Activated CD8-positive, alpha-beta T cell treated with anti-CD3 and anti-CD28 coated beads for 36 hours (primary cell): ENCODE measurements at regions of chr7 and their contacts with region 1.

Region 1: DNA sequence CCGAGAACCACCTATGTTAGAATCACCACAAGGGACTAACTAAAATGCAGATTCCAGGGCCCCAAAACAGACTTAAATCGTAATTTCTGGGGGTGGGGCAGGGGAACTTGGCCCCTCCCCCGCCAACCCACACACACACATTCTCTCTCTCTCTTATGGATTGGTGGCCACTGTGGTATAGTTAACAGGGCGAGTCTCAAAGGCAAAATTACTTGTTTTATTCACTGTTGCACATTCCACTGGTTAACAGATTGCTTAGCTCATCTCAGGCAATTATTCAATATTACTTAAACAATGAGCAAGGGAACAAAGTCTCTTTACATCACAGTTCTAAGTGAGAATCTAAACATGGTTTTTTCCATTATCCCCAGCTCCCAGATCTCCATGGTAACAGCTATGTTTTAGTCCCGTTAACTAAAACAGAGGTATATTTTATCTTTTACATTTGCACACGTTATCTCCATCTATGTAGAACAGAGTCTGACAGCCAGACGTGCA is 38.5 kb downstream of the IGF2BP3 start:
- DNase-seq: no peak
- ATAC-seq: no peak
- H3K4me3 Mint-ChIP-seq: no peak overlapping the region
- H3K27ac Mint-ChIP-seq: no peak overlapping the region
- H3K4me1 Mint-ChIP-seq: peaks cover 8% of the 10 kb centered on the region
- H3K27me3 Mint-ChIP-seq: peaks cover 18% of the 10 kb centered on the region
- CTCF ChIP-seq: no peak

Region 2: DNA sequence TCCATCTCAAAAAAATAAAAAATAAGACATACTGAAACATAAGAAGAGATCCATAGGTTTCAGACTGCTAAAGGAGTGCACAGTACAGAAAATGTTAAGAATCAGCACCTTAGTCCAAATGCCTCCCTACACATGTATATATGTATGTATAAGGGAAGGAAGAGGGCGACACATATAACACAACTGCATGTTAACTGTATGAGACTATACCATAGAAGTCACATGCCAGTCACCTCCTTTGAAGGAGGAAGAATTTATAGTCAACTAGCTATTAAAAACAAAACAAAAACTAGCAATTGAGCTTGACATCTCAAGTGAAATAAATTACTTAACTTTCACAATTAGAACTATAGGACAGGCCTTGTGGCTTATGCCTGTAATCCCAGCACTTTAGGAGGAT is 11.9 kb before region 1 on chr7:
- CTCF ChIA-PET with region 1: interaction called, 16 read pairs
- POLR2A ChIA-PET with region 1: no interaction called
- intact Hi-C with region 1: no loop called
- DNase-seq: no peak
- ATAC-seq: no peak
- H3K4me3 Mint-ChIP-seq: no peak overlapping the region
- H3K27ac Mint-ChIP-seq: no peak overlapping the region
- H3K4me1 Mint-ChIP-seq: peaks cover 10% of the 10 kb centered on the region
- H3K27me3 Mint-ChIP-seq: peaks cover 4% of the 10 kb centered on the region
- CTCF ChIP-seq: no peak